Sciatic nerve (tissue), 2 donors: ENCODE measurements at regions of chr1 and their contacts with region 1.

Region 1: GRCh38 chr1:54577612-54578011 is 29.6 kb downstream of the ACOT11 start:
- DNase-seq: peak; percentile 87
- ATAC-seq: no peak

Region 2: DNA sequence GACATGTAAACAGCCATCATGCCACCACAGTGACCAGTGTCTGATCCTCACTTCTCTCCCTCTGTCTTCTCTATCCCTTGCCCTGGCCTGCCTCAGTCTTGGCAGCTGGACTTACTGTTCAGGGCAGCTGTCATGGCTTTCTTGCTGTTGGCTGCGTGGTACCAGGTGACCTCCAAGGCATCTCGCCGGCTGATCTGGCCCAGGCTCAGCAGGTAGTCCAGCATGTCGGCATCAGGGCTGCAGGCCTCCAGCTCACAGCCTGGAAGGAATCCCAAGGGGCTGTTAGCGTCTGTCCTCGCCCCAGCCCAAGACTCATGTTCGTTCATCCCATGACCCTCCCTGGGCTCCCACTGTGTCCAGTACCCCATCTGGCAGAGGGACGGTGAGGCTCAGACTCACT is 42.1 kb after region 1 on chr1:
- intact Hi-C with region 1: loop called (anchors 1 kb)
- DNase-seq: no peak
- ATAC-seq: no peak

Region 3: DNA sequence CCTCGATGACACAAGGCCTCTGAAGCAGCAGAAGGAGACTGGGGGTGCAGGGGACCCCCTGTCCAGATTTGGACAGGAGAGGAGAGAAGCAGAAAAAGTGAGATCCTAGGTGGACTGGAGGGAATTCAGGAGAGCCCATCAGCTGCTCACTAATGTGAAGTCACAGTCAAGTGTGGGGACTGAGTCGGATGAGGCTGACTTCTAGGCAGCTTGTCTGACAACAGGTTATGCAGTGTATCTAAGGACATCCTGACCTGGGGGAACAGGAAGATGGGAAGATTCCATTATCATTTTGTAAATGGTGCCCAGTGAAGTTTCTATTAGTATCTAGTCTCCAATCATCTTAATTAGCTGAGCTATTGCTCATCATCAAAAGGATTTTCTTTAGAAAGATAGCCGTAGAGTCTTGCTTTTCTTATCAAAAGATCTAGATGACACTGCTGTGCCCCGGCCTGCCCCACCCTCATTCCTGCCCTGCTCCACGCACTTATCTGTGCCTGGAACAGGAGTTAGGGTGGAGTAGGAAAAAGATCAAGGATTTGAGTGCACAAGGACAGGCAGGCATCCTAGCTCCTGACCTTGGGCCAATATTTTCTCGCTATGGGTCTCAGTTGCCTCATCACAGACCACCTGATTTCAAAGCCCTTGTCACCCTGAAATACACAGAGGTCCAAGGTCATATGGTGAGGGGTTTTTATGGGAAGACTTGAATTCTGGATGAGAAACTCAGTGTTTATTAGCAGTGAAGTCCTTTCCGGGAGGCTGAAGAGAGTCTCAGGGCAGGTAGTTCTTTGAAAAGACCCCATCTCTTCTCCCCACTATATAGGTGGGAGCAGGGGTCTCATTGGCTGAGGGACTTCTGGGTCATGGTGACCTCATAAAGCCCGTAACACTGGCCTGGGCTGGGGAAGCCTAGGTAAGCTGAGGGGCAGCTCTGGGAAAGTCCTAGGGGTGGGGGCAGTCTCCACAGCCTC is 63.5 kb after region 1 on chr1 and contains the start of gene MROH7:
- intact Hi-C with region 1: loop called (anchors 1 kb)
- DNase-seq: no peak
- ATAC-seq: no peak
- total RNA-seq, gene MROH7: 8.1 TPM

Region 4: GRCh38 chr1:54950369-54951163 is 373.0 kb after region 1 on chr1:
- intact Hi-C with region 1: no loop called
- DNase-seq: peak; percentile 84
- ATAC-seq: peak; percentile 95